Activated naive CD4-positive, alpha-beta T cell treated with anti-CD3 and anti-CD28 coated beads for 36 hours (primary cell): ENCODE measurements at regions of chr11 and their contacts with region 1.

Region 1: GRCh38 chr11:94504689-94505293 is 7.5 kb upstream of the C11orf97 start:
- DNase-seq: no peak
- H3K4me3 Mint-ChIP-seq: no peak overlapping the region
- H3K27ac Mint-ChIP-seq: no peak overlapping the region
- H3K4me1 Mint-ChIP-seq: no peaks in the 10 kb centered on the region
- H3K27me3 Mint-ChIP-seq: peaks cover 3% of the 10 kb centered on the region

Region 2: DNA sequence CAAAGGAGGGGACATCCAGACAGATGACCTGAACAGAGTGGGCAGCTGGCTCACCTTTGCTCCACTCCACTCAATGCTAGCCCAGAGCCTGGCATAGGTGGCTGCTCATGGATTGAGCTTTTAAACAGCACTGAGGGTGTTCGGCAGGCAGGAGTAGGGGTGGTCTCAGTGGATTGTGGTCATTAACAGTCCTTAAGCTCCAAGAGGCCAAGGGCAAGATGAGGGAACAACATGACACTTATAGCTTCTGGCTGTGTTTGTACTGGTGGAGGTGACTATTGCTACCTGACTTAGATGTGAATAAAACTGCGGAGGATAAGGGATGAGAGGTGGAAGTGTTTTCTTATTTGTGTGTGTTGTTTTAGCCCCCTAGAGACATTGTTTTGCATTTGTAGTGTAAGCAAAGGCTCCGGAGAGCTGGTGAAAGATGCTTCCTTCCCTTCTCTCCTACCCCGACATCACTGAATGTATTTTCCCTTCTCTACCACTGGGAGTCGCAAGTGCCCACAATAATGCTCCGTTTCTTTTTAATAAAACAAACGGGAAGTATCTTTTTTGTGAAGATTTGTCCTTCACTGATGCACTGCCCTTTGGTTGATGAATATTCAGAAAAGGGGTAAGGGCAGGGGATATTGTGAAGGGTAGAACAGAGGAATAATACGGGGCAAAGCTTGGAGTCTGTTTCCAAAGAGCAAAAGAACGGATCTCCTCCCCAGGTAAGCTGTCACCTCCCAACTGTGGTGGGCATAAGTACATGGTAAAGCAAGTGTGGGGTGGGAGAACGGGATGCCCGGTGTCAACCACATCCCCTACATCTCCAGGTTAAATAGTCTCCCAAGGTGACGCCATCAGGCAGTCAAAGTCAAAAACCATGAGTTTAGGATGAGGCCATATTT is 1562.9 kb before region 1 on chr11:
- CTCF ChIA-PET with region 1: interaction called, 3 read pairs
- intact Hi-C with region 1: loop called (anchors 10 kb)
- DNase-seq: peak; percentile 27
- H3K4me3 Mint-ChIP-seq: no peak overlapping the region
- H3K27ac Mint-ChIP-seq: no peak overlapping the region
- H3K4me1 Mint-ChIP-seq: no peaks in the 10 kb centered on the region
- H3K27me3 Mint-ChIP-seq: peaks cover 22% of the 10 kb centered on the region

Region 3: DNA sequence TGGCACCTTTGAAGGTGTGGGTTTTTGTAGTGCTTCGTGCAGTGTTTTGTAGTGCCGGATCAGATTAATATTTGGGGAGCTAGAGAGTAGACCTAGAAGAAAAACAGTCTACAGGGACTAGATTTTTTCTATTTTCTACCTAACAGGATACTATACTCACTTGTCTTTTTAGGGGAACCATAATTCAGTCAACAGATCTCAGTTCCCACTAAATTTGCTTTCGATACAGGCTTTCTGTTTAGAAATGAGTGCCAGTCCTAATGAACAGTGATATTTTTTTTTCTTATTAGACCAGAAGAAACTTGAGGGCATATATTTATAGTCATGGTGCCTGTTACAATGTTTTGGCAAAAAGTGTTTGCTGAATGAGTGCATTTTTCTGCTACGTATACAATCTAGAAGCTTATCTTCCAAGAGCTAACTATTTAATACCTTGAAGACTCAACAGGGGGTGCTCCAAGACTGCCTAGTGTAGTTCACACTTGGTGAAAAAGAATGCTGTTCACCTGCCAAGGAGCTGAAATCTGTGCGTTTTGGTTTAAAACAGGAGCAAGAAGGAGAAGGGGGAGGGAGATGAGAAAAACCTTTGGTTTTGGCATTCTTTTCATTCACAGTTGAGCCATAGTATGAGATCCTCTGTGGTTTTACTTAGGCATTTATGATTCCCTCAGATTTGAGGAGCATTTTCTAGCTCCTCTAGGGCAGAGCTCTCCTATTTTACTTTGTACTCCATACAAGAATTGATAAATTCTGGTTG is 609.5 kb before region 1 on chr11:
- CTCF ChIA-PET with region 1: interaction called, 26 read pairs
- intact Hi-C with region 1: loop called (anchors 1 kb)
- DNase-seq: peak; percentile 42
- H3K4me3 Mint-ChIP-seq: no peak overlapping the region
- H3K27ac Mint-ChIP-seq: no peak overlapping the region
- H3K4me1 Mint-ChIP-seq: no peaks in the 10 kb centered on the region
- H3K27me3 Mint-ChIP-seq: peaks cover 40% of the 10 kb centered on the region

Region 4: DNA sequence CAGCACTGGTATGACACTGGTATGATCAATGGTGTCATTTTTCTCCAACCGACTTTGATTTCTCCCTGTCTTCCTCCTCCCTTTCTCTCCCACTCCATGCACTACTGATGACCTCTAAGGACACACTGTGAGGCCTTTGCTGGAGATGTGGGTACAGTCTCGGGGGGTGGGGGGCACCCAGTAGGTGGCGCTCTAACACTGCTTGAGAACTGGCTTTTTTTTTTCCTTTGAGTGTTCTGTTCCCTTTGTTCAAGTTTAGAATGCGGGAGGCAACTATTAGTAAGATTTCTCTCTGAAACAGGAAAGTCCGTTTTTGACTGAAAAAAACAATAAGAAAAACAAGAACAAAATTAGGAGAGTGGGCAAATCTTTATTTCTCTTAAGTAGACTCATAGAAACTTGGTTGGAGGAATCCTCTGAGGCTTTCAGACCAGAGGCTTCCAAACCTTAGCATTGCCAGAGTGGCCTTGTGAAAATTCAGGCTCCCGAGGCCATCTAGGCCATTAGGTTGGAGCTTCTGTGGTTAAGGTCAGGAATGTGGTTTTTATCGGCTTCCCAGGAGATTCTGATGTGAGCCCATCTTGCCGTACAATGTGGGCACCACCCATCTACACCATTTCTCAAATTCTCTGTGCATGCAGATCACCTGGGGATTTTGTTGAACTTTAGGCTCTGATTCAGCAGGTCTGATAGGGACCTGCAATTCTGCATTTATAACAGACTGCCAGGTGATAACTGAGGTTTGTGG is 332.9 kb before region 1 on chr11:
- CTCF ChIA-PET with region 1: no interaction called
- intact Hi-C with region 1: loop called (anchors 1 kb)
- DNase-seq: peak; percentile 55
- H3K4me3 Mint-ChIP-seq: no peak overlapping the region
- H3K27ac Mint-ChIP-seq: no peak overlapping the region
- H3K4me1 Mint-ChIP-seq: peaks cover 18% of the 10 kb centered on the region
- H3K27me3 Mint-ChIP-seq: no peaks in the 10 kb centered on the region

Region 5: DNA sequence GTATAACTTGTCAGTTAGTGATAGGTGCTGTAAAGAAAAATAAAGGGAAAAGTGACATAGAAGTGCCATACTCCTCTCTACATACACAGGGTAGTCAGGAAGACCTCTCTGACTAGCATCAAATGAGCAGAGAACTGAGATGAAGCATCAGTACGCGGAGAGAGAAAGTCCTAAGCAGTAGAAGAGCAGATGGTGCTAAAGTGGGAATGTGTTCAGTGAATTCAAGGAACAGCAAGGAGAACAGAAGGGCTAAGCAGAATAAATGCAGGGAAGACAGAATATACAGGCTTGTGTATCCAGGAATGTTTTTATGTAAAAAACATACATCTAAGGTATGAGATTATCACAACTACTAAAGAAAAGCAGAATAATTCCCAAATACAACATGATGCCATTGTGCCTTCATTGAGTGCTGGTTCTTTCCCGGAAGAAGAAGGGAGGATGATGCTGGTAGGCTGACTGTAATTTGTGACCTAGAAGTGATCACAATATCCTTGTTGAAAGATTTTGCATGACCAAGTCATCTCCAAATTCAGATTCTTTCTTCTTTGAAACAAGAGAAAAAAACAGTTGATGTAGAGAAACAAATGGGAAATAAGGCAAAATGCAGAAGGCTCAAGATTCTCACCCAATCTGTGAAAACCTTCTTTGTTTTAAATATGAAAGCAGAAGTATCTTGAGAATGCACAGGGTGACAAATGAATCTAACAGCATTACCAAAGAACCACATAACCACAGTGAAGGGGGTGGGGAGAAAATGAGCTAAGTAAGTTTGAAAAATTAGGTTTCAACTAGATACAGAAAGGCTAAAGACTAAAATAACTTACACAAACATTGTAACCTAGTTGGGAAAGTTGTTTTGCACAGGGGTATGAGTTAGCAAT is 31.6 kb before region 1 on chr11:
- CTCF ChIA-PET with region 1: no interaction called
- intact Hi-C with region 1: no loop called
- DNase-seq: peak; percentile 23
- H3K4me3 Mint-ChIP-seq: no peak overlapping the region
- H3K27ac Mint-ChIP-seq: no peak overlapping the region
- H3K4me1 Mint-ChIP-seq: peaks cover 13% of the 10 kb centered on the region
- H3K27me3 Mint-ChIP-seq: no peaks in the 10 kb centered on the region

Region 6: DNA sequence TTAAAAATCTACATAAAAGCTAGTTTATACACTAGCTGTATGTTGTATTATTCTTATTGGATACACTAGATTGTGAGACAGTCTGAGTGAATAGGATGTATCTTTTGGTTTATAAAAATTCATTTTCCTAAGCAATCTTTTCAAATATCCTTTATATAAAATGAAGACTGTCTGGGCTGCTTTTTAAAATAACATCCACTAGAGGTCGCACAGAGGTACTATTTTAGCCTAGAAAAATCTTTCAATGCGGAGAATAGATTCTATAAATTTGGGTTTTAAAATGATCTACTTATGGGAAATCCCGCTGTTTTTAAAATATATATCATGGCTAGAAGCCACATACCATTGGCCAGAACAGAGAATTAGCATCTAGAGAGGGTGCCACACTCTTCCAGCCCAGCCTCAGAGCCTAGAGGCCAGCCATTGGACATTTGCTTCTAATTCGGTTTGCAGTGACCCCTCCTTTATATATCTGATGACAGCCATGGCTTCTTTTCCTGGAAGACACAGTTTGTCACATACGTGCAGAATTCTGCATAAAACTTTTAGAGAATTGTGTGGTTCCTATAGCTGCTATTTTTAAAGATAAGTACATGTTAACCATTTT is 14.8 kb after region 1 on chr11:
- CTCF ChIA-PET with region 1: interaction called, 11 read pairs
- intact Hi-C with region 1: no loop called
- DNase-seq: peak; percentile 16
- H3K4me3 Mint-ChIP-seq: no peak overlapping the region
- H3K27ac Mint-ChIP-seq: no peak overlapping the region
- H3K4me1 Mint-ChIP-seq: no peaks in the 10 kb centered on the region
- H3K27me3 Mint-ChIP-seq: peaks cover 9% of the 10 kb centered on the region

Region 7: DNA sequence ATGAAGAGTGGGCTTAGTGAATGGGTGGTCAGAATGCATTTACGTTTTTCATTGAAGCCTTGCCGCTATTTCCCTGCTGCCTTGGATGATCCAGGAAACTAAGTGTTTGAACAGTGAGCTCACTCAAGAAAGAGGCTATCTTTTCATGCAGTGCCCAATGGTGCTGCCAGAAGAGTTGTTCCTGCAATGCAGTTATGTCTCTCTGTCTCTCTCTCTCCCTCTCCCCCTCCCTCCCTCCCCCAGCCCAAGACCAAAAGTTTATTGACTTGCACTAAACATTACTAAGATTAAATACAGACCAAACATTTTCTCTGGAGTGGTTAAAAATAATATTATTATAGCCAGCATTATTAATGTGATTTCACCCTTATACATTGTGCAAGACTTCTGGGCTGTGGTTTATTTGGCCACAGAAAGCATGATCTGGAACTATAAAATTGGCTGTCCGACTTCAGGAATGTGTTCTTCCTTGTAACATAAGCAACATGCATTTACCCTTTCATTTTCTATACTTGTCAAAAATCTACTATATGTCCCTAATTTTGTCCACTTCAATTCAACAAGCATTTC is 32.3 kb after region 1 on chr11:
- CTCF ChIA-PET with region 1: no interaction called
- intact Hi-C with region 1: no loop called
- DNase-seq: no peak
- H3K4me3 Mint-ChIP-seq: no peak overlapping the region
- H3K27ac Mint-ChIP-seq: no peak overlapping the region
- H3K4me1 Mint-ChIP-seq: no peaks in the 10 kb centered on the region
- H3K27me3 Mint-ChIP-seq: peaks cover 12% of the 10 kb centered on the region